ENCODE measurements at regions of chr5 and their contacts with region 1.

Region 1: DNA sequence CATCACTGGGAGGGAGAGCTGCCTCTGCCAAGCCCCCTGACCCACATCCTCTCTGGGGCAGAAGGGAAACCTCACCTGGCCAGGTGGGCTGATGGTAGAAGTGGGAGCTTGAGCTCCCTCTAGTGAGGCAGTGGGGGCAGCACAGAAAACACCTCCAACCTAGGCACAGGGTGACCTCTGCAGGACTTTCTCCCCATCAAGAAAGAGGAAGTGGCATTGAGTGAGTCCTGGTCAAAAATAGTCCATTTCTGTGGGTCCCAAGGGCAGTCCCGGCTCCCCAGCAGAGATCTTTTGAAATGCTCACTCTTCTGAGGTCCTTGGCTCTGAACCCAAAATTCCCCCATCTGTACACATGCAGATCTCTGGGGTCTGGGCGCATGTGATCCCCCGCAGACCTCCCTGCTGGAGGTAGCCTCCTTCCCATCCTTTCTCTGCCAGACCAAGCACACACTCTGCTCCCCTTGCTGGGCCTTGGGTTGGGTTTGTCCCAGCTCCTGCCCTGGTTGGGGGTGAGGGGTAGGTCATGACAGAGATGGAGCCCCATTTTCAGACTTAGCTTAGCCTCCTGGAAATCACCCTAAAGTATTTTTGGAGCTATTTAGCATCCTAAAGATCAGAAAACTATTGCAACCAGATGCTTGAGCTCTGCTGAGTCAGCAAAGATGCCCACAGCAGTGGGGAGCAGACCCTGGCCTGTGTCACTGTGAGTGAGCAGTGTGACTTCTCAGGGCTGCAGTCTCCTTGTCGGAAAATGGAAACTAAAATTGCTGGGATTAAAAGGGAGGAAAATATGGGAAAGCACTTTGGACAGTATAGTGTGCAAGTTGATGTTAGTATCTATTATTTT is 41.6 kb upstream of the LCP2 start:
- DNase-seq: peak; percentile 86
- H3K4me3 Mint-ChIP-seq: no peak overlapping the region
- H3K27ac Mint-ChIP-seq: peak overlapping the region; percentile 66
- H3K4me1 Mint-ChIP-seq: peaks cover 46% of the 10 kb centered on the region
- H3K27me3 Mint-ChIP-seq: no peaks in the 10 kb centered on the region

Region 2: GRCh38 chr5:170216266-170216864 is 122.8 kb before region 1 on chr5:
- CTCF ChIA-PET with region 1: interaction called, 22 read pairs
- intact Hi-C with region 1: no loop called
- DNase-seq: peak; percentile 33
- H3K4me3 Mint-ChIP-seq: no peak overlapping the region
- H3K27ac Mint-ChIP-seq: no peak overlapping the region
- H3K4me1 Mint-ChIP-seq: no peaks in the 10 kb centered on the region
- H3K27me3 Mint-ChIP-seq: no peaks in the 10 kb centered on the region

Region 3: GRCh38 chr5:170235876-170236864 is 103.0 kb before region 1 on chr5:
- CTCF ChIA-PET with region 1: interaction called, 43 read pairs
- intact Hi-C with region 1: no loop called
- DNase-seq: no peak
- H3K4me3 Mint-ChIP-seq: no peak overlapping the region
- H3K27ac Mint-ChIP-seq: no peak overlapping the region
- H3K4me1 Mint-ChIP-seq: peaks cover 12% of the 10 kb centered on the region
- H3K27me3 Mint-ChIP-seq: no peaks in the 10 kb centered on the region

Region 4: GRCh38 chr5:170262061-170263045 is 76.8 kb before region 1 on chr5:
- CTCF ChIA-PET with region 1: interaction called, 209 read pairs
- intact Hi-C with region 1: no loop called
- DNase-seq: peak; percentile 67
- H3K4me3 Mint-ChIP-seq: peak overlapping the region; percentile 27
- H3K27ac Mint-ChIP-seq: peak overlapping the region; percentile 90
- H3K4me1 Mint-ChIP-seq: peaks cover 73% of the 10 kb centered on the region
- H3K27me3 Mint-ChIP-seq: no peaks in the 10 kb centered on the region

Region 5: GRCh38 chr5:170287532-170287931 is 51.6 kb before region 1 on chr5:
- CTCF ChIA-PET with region 1: interaction called, 195 read pairs
- intact Hi-C with region 1: no loop called
- DNase-seq: no peak
- H3K4me3 Mint-ChIP-seq: no peak overlapping the region
- H3K27ac Mint-ChIP-seq: peak overlapping the region; percentile 85
- H3K4me1 Mint-ChIP-seq: peaks cover 97% of the 10 kb centered on the region
- H3K27me3 Mint-ChIP-seq: no peaks in the 10 kb centered on the region

Region 6: GRCh38 chr5:170420780-170421412 is 81.7 kb after region 1 on chr5:
- CTCF ChIA-PET with region 1: interaction called, 8 read pairs
- intact Hi-C with region 1: loop called (anchors 1 kb)
- DNase-seq: peak; percentile 71
- H3K4me3 Mint-ChIP-seq: no peak overlapping the region
- H3K27ac Mint-ChIP-seq: no peak overlapping the region
- H3K4me1 Mint-ChIP-seq: peaks cover 15% of the 10 kb centered on the region
- H3K27me3 Mint-ChIP-seq: no peaks in the 10 kb centered on the region